ENCODE measurements at regions of chr2 and their contacts with region 1.

Region 1: DNA sequence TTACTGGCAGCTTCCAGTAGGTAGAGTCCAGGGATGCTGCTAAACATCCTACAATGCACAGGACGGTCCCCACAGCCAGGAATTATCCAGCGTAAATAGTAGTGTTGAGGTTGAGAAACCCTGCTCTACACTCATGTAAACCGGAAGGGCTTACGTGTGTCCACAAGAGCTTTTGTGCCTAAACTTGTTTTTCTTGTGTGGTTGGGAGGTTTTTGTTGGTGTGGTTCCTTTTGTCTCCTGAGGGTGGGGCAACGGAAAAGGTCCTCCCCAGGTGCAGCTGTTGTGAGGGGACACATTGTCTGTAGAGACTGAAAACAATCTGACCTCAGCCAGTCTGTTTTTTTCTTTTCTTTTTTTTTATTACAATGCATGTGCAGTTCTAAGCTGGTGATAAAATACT is 72.7 kb upstream of the MGAT5 start:
- DNase-seq: peak in 2 of 3 donors; percentile 29 to 55
- H3K4me3 ChIP-seq: no peak overlapping the region
- H3K27ac ChIP-seq: no peak overlapping the region
- H3K4me1 ChIP-seq: peaks cover 0 to 8% (median 2%) of the 10 kb centered on the region in 4 experiments
- H3K27me3 ChIP-seq: no peaks in the 10 kb centered on the region

Region 2: GRCh38 chr2:134198006-134198634 is 16.9 kb after region 1 on chr2:
- CTCF ChIA-PET with region 1: interaction called, 10 read pairs
- POLR2A ChIA-PET with region 1: no interaction called
- DNase-seq: no peak
- H3K4me3 ChIP-seq: no peak overlapping the region
- H3K27ac ChIP-seq: no peak overlapping the region
- H3K4me1 ChIP-seq: peaks cover 4 to 27% (median 7%) of the 10 kb centered on the region in 4 experiments
- H3K27me3 ChIP-seq: no peaks in the 10 kb centered on the region

Measured in common myeloid progenitor, CD34-positive (primary cell).